ENCODE measurements at regions of chr17 and their contacts with region 1.

Region 1: GRCh38 chr17:5191541-5192417 is at the start of gene ZNF594:
- DNase-seq: peak; percentile 98
- ATAC-seq: peak; percentile 100
- H3K4me3 Mint-ChIP-seq: peak within 1 kb of the TSS; percentile 94
- H3K27ac Mint-ChIP-seq: peak within 1 kb of the TSS; percentile 92
- H3K4me1 Mint-ChIP-seq: peaks cover 28% of the 10 kb centered on the region
- H3K27me3 Mint-ChIP-seq: no peaks in the 10 kb centered on the region
- total RNA-seq, gene ZNF594: 10.5 to 11.3 TPM

Region 2: DNA sequence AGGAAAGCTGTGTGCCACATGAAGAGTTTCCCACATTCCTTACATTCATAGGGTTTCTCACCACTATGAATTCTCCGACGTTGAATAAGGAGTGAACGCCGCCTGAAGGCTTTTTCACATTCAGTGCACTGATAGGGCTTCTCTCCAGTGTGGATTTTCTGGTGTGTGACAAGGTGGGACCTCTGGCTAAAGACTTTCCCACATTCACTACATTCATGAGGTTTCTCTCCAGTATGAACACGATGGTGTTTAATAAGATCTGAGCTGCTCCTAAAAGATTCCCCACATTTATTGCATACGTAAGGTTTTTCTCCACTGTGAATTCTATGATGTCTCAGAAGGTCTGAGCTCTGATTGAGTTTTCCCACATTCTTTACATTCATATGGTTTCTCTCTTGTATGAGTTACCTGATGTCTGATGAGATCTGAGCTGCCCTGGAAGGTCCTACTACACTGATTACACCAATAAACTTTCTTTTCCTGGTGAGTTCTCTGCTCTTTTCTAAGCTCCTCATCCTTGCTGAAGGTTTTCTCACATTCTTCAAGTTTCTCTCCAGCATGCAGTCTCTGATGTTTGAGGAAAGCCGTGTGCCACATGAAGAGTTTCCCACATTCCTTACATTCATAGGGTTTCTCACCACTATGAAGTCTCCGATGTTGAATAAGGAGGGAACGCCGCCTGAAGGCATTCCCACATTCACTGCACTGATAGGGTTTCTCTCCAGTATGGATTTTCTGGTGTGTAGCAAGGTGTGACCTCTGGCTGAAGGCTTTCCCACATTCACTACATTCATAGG is 10.1 kb before region 1 on chr17:
- CTCF ChIA-PET with region 1: interaction called, 11 read pairs
- DNase-seq: no peak
- ATAC-seq: no peak
- H3K4me3 Mint-ChIP-seq: no peak overlapping the region
- H3K27ac Mint-ChIP-seq: no peak overlapping the region
- H3K4me1 Mint-ChIP-seq: peaks cover 4% of the 10 kb centered on the region
- H3K27me3 Mint-ChIP-seq: no peaks in the 10 kb centered on the region

Region 3: GRCh38 chr17:5209396-5209795 is 17.6 kb after region 1 on chr17:
- CTCF ChIA-PET with region 1: no interaction called
- DNase-seq: no peak
- ATAC-seq: no peak
- H3K4me3 Mint-ChIP-seq: no peak overlapping the region
- H3K27ac Mint-ChIP-seq: no peak overlapping the region
- H3K4me1 Mint-ChIP-seq: no peaks in the 10 kb centered on the region
- H3K27me3 Mint-ChIP-seq: no peaks in the 10 kb centered on the region